Activated naive CD8-positive, alpha-beta T cell treated with anti-CD3 and anti-CD28 coated beads, Interleukin-2, amount 10 ng/mL, durations not matched to agents 7 days and 5 days (primary cell): ENCODE measurements at regions of chr11 and their contacts with region 1.

Region 1: DNA sequence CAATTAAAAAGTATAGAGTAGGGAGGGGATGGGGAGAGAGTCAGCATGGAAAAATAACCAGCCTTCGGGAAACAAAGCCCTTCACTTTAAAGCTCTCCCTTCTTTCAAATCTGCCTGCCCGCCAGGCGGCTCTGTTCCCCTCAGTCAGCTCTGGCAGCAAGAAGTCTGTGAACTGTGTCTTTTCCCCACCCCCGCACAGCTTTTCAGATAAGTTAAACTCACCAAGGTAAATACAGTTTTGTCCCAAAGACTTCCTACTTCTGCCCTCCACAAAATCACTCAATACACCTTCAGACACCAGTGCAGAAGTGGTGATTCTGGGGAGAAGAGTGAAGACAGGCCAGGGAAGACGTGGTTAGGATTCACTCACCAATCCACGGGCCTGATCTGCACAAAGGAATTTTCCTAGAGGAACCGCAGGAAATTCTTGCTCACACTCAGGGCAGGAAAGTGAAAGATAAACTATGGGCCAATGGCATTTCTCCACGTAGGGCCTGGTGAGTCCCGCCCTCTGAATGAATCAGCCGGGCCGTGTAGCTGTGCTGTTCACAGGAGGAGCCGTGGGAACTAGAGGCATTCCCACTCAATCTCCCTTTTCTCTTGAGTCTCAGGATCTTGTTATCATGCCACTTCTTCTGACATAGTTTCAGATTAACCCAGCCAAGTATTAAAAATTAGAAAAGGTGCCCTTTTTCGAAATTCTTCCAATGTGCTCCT is at the start of gene TRIM5:
- DNase-seq: peak; percentile 68
- ATAC-seq: peak; percentile 79
- H3K4me3 Mint-ChIP-seq: peak within 1 kb of the TSS; percentile 97
- H3K27ac Mint-ChIP-seq: peak within 1 kb of the TSS; percentile 91
- H3K4me1 Mint-ChIP-seq: peaks cover 43% of the 10 kb centered on the region
- H3K27me3 Mint-ChIP-seq: no peaks in the 10 kb centered on the region
- total RNA-seq, gene TRIM5: 33.1 to 36.4 TPM

Region 2: DNA sequence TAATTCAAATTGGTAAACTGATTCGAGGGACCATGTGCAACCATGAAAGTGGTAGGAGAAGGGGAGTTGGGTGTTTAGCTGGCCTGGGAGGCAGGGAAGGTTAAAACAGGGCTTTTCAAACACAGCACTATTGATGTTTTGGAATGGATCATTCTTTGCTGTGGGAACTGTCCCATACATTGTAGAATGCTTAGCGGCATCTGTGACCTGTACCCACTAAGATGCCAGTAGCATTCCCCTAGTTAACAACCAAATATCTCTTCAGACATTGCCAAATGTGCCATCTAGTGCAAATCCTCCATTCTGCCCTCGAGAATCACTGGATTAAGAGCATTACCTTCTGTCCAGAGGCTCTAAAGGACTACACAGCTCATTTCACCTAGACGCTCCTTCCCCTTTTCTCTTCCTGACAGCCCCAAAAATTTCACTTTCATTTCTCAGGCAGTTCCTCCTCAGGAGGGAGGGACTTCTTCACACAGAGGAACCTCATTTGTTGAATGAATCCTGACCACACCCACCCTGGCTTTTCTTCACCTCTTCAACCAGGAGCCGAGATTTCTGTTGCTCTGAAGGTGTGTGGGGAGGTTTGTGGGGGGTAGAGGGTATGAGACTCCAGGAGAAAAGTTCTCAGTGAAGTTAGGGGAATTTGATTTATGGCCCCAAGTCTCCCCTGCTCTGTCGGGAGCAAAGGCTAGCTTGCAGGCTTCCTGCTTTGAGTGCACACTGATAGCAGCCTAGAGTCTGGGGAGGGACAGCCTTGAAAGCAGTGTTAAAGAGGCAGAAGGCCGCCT is 60.1 kb before region 1 on chr11 and contains the start of gene TRIM34:
- POLR2A ChIA-PET with region 1: interaction called, 72 read pairs
- DNase-seq: peak; percentile 55
- ATAC-seq: peak; percentile 98
- H3K4me3 Mint-ChIP-seq: peak within 1 kb of the TSS; percentile 93
- H3K27ac Mint-ChIP-seq: peak within 1 kb of the TSS; percentile 97
- H3K4me1 Mint-ChIP-seq: peaks cover 36% of the 10 kb centered on the region
- H3K27me3 Mint-ChIP-seq: no peaks in the 10 kb centered on the region
- total RNA-seq, gene TRIM34: 17.3 to 17.5 TPM

Region 3: GRCh38 chr11:5665051-5665570 is 19.7 kb before region 1 on chr11:
- POLR2A ChIA-PET with region 1: no interaction called
- DNase-seq: no peak
- ATAC-seq: no peak
- H3K4me3 Mint-ChIP-seq: no peak overlapping the region
- H3K27ac Mint-ChIP-seq: no peak overlapping the region
- H3K4me1 Mint-ChIP-seq: peaks cover 8% of the 10 kb centered on the region
- H3K27me3 Mint-ChIP-seq: no peaks in the 10 kb centered on the region

Region 4: DNA sequence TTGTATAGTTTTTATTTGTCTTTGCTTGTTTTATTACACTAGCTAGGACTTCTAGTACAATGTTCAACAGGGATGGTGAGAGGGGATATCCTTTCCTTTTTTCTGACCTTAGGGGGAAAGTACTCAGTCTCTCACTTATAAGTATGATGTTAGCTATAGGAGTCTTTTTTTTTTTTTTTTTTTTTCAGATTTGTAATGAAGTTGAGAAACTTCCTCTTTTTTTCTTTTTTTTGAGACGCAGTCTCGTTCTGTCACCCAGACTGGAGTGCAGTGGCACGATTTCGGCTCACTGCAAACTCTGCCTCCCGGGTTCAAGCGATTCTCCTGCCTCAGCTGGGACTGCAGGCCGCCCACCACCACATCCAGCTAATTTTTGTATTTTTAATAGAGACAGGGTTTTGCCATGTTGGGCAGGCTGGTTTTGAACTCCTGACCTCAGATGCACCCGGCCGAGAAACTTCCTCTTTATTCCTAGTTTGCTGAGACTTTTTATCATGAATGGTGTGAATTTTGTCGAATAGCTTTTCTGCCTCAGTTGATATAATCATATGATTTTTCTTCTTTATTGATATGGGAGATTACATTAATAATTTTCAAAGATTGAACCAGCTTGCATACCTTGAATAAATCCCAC is 15.7 kb after region 1 on chr11:
- POLR2A ChIA-PET with region 1: interaction called, 29 read pairs
- DNase-seq: no peak
- ATAC-seq: no peak
- H3K4me3 Mint-ChIP-seq: peak overlapping the region; percentile 5
- H3K27ac Mint-ChIP-seq: no peak overlapping the region
- H3K4me1 Mint-ChIP-seq: peaks cover 46% of the 10 kb centered on the region
- H3K27me3 Mint-ChIP-seq: no peaks in the 10 kb centered on the region

Region 5: GRCh38 chr11:5712507-5712906 is 27.7 kb after region 1 on chr11:
- POLR2A ChIA-PET with region 1: interaction called, 14 read pairs
- DNase-seq: no peak
- ATAC-seq: no peak
- H3K4me3 Mint-ChIP-seq: no peak overlapping the region
- H3K27ac Mint-ChIP-seq: no peak overlapping the region
- H3K4me1 Mint-ChIP-seq: peaks cover 10% of the 10 kb centered on the region
- H3K27me3 Mint-ChIP-seq: no peaks in the 10 kb centered on the region